H1 (cell line): ENCODE measurements at regions of chr19 and their contacts with region 1.

Region 1: DNA sequence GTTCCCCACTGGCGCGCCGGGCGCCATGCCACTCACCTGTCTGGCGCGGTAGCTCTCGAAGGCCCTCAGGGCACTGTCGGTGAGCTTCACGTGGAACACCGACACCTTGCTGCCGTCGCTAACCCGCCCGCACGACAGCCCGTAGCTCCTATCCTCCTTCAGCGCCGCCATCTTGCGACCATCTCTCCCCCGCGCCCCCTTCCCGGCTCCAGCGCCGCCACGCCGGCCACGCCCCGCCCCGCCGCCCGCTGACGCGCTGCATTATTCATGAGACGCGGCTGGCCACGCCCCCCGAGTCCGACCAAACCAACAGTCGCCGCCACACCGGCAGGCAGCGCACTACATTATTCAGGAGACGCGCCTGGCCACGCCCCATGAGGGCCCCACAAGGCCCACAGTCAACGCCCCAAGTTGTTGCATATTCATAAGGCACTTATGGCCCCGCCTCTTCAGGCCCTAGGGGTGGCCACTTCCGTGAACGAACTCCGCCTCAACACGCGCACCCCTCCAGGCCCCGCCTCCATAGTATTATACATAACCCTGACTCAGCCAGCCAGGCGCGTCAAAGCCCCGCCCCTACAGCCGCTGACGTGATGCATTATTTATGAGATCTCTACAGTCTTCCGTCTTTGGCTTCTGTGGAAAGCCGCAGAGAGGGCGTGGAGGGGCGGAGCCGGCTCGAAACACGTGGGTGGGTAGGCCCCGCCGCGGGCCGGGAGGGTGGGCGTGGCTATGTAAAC is at the start of gene ELL:
- DNase-seq: peak; percentile 100
- H3K4me3 ChIP-seq: peak within 1 kb of the TSS; percentile 88 to 98 (median 89)
- H3K27ac ChIP-seq: peak within 1 kb of the TSS; percentile 76
- H3K4me1 ChIP-seq: peaks cover 0 to 3% (median under 1%) of the 10 kb centered on the region in 4 experiments; a peak in 4 of 7 replicates
- H3K27me3 ChIP-seq: no peaks in the 10 kb centered on the region; a peak in 1 of 7 replicates
- CTCF ChIP-seq: 0 out of 4 replicates have a peak, but pooled peaks of 1 of the 3 experiments have one; percentile 3
- EP300 ChIP-seq: no peak
- POLR2A ChIP-seq: peak in 1 of 2 experiments; percentile 87; a peak in 2 of 3 replicates
- RAD21 ChIP-seq: no peak
- total RNA-seq, gene ELL: 10.2 and 10.5 TPM in 2 replicates

Region 2: DNA sequence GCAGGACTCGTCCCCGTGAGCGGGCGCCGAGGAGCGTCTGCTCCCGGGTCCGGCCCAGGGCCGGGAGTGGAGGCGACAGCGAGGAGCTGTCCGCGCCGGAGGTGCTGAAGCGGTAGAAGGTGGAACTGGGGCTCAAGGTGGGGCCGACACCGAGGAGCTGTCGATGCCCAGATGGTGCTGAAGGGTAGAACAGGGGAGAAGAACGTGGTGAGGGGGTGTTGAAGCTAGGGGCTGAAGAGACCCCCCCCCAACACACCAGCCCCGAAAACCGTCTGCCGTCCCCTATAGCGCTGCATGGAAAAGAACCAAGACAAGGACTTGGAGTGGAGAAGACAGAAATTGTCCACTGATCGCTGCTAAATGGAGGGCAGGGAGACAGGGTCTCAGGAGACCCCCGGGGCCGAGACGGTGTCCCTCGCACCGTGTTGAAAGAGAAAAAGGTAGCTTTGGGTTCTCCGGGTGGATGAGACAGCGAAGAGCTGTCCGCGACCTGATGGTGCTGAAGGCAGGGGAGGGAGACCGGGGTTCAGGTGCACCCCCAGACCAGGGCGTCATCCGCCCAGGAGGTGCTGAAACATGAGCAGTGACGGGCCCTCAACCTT is 288.7 kb before region 1 on chr19:
- CTCF ChIA-PET with region 1: no interaction called
- POLR2A ChIA-PET with region 1: no interaction called
- DNase-seq: peak in 1 of 2 experiments; percentile 95
- H3K4me3 ChIP-seq: peak overlapping the region; percentile 11 to 54 (median 32); a peak in 7 of 8 replicates
- H3K27ac ChIP-seq: no peak overlapping the region
- H3K4me1 ChIP-seq: peaks cover 6 to 20% (median 14%) of the 10 kb centered on the region in 4 experiments
- H3K27me3 ChIP-seq: no peaks in the 10 kb centered on the region
- CTCF ChIP-seq: no peak
- EP300 ChIP-seq: peak in 1 of 2 experiments; percentile 18; a peak in 1 of 3 replicates
- POLR2A ChIP-seq: no peak
- RAD21 ChIP-seq: no peak

Region 3: GRCh38 chr19:18478569-18479311 is 43.3 kb before region 1 on chr19:
- CTCF ChIA-PET with region 1: interaction called, 458 read pairs
- POLR2A ChIA-PET with region 1: interaction called, 3 read pairs
- DNase-seq: no peak
- H3K4me3 ChIP-seq: no peak overlapping the region
- H3K27ac ChIP-seq: no peak overlapping the region
- H3K4me1 ChIP-seq: no peaks in the 10 kb centered on the region; a peak in 1 of 7 replicates
- H3K27me3 ChIP-seq: no peaks in the 10 kb centered on the region
- CTCF ChIP-seq: no peak
- EP300 ChIP-seq: no peak
- POLR2A ChIP-seq: no peak
- RAD21 ChIP-seq: no peak

Region 4: DNA sequence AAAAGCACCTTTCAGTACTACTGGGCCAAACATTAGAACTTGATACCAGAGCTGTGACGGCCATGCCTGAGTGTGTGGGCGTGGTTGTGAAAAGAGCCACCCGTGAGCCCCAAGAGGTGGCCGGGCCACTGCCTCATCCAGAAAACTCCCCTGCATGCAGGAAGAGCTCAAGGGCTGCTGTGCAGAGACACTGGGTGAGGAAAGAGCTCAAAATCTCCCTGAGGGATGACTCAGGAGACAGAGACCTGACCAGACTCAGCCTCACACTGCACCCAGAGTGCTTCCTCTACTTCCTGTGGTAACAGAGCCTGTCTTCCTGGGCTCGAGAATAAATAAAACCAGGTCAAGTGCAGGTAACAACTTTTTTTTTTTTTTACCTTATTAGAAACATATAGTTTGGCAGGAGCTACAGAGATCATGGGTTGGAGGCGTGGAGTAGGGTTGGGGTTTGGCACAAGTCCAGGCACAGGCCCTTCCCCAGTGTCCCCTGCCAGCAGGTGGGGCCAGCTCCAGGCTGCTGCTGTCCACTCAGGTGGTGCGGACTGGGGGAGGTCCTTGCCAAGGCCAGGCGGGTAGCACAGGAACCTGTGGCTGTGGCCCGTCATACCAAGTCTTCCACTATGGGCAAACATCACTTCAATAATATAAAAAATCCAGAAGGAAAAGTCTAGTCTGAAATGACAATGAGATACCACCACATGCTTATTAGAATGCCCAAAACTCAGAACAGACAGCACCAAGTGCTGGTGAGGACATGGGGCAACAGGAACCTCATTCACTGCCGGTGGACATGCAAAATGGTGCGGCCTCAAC is 25.7 kb before region 1 on chr19:
- CTCF ChIA-PET with region 1: interaction called, 458 read pairs
- POLR2A ChIA-PET with region 1: no interaction called
- DNase-seq: no peak
- H3K4me3 ChIP-seq: no peak overlapping the region
- H3K27ac ChIP-seq: 0 out of 2 replicates have a peak overlapping the region, but pooled peaks have one; percentile 5
- H3K4me1 ChIP-seq: peaks cover 0 to 9% (median 2%) of the 10 kb centered on the region in 4 experiments; a peak in 3 of 7 replicates
- H3K27me3 ChIP-seq: no peaks in the 10 kb centered on the region
- CTCF ChIP-seq: peak in 1 of 3 experiments; percentile 14; a peak in 1 of 4 replicates
- EP300 ChIP-seq: no peak
- POLR2A ChIP-seq: no peak
- RAD21 ChIP-seq: no peak

Region 5: GRCh38 chr19:18507021-18507726 is 14.9 kb before region 1 on chr19:
- CTCF ChIA-PET with region 1: interaction called, 39 read pairs
- POLR2A ChIA-PET with region 1: interaction called, 4 read pairs
- DNase-seq: no peak
- H3K4me3 ChIP-seq: no peak overlapping the region
- H3K27ac ChIP-seq: no peak overlapping the region
- H3K4me1 ChIP-seq: no peaks in the 10 kb centered on the region; a peak in 1 of 7 replicates
- H3K27me3 ChIP-seq: no peaks in the 10 kb centered on the region
- CTCF ChIP-seq: no peak
- EP300 ChIP-seq: no peak
- POLR2A ChIP-seq: no peak
- RAD21 ChIP-seq: no peak

Region 6: GRCh38 chr19:18557474-18558201 is 35.6 kb after region 1 on chr19 and contains the start of gene KXD1:
- CTCF ChIA-PET with region 1: interaction called, 10 read pairs
- POLR2A ChIA-PET with region 1: interaction called, 5 read pairs
- DNase-seq: peak; percentile 73 to 88
- H3K4me3 ChIP-seq: peak within 1 kb of the TSS; percentile 59 to 79 (median 70)
- H3K27ac ChIP-seq: 0 out of 2 replicates have a peak within 1 kb of the TSS, but pooled peaks have one; percentile 17
- H3K4me1 ChIP-seq: no peaks in the 10 kb centered on the region; a peak in 1 of 7 replicates
- H3K27me3 ChIP-seq: no peaks in the 10 kb centered on the region
- CTCF ChIP-seq: no peak
- EP300 ChIP-seq: no peak
- POLR2A ChIP-seq: no peak
- RAD21 ChIP-seq: no peak
- total RNA-seq, gene KXD1: 113 and 115 TPM in 2 replicates

Region 7: GRCh38 chr19:18571564-18572300 is 49.7 kb after region 1 on chr19 and contains the start of gene UBA52:
- CTCF ChIA-PET with region 1: interaction called, 7 read pairs
- POLR2A ChIA-PET with region 1: interaction called, 19 read pairs
- DNase-seq: peak; percentile 89 to 99
- H3K4me3 ChIP-seq: peak within 1 kb of the TSS; percentile 93 to 99 (median 98)
- H3K27ac ChIP-seq: peak within 1 kb of the TSS; percentile 89
- H3K4me1 ChIP-seq: peaks cover 0 to 9% (median 6%) of the 10 kb centered on the region in 4 experiments; a peak in 6 of 7 replicates
- H3K27me3 ChIP-seq: no peaks in the 10 kb centered on the region
- CTCF ChIP-seq: peak in 1 of 3 experiments; percentile 15; a peak in 1 of 4 replicates
- EP300 ChIP-seq: no peak
- POLR2A ChIP-seq: peak in 1 of 2 experiments; percentile 91; a peak in 2 of 3 replicates
- RAD21 ChIP-seq: no peak
- total RNA-seq, gene UBA52: 1,331 and 1,340 TPM in 2 replicates